ENCODE measurements at regions of chr1 and their contacts with region 1.

Region 1: DNA sequence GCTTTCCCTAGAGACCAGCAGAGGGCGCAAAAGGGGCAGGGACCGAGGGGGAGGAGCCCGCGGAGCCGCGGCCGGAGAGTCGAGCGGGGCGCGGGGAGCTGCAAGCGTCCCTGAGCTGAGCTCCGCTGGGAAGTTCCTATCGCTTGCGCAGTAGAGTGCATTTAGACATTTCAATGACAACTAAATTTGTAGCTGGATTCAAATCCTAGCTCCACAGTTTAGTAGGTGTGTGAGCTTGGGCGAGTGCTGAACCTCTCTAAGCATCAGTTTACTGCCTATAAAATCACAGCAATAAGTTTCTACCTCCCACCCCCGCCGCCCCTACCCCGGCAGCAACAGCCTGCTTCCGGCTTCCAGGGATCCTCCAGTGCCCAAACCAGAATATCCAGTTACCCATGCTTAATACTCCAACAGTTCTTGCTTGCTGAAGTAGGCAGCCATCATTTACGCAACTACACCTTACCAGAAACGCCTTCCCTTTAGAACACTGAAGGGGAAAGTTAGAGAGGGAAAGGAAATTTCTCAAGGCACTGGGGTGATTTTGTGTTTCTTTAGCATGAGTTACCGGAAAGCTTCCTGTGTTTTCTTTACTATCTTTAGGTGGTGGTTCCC is 9.1 kb downstream of the TLR5 start:
- DNase-seq: peak; percentile 92
- H3K4me3 Mint-ChIP-seq: peak overlapping the region; percentile 62
- H3K27ac Mint-ChIP-seq: peak overlapping the region; percentile 72
- H3K4me1 Mint-ChIP-seq: peaks cover 53% of the 10 kb centered on the region
- H3K27me3 Mint-ChIP-seq: no peaks in the 10 kb centered on the region
- CTCF ChIP-seq: peak; percentile 96

Region 2: GRCh38 chr1:222844189-222844779 is 289.6 kb before region 1 on chr1:
- CTCF ChIA-PET with region 1: no interaction called
- intact Hi-C with region 1: no loop called
- DNase-seq: no peak
- H3K4me3 Mint-ChIP-seq: peak overlapping the region; percentile 55
- H3K27ac Mint-ChIP-seq: peak overlapping the region; percentile 95
- H3K4me1 Mint-ChIP-seq: peaks cover 21% of the 10 kb centered on the region
- H3K27me3 Mint-ChIP-seq: no peaks in the 10 kb centered on the region
- CTCF ChIP-seq: no peak

Region 3: DNA sequence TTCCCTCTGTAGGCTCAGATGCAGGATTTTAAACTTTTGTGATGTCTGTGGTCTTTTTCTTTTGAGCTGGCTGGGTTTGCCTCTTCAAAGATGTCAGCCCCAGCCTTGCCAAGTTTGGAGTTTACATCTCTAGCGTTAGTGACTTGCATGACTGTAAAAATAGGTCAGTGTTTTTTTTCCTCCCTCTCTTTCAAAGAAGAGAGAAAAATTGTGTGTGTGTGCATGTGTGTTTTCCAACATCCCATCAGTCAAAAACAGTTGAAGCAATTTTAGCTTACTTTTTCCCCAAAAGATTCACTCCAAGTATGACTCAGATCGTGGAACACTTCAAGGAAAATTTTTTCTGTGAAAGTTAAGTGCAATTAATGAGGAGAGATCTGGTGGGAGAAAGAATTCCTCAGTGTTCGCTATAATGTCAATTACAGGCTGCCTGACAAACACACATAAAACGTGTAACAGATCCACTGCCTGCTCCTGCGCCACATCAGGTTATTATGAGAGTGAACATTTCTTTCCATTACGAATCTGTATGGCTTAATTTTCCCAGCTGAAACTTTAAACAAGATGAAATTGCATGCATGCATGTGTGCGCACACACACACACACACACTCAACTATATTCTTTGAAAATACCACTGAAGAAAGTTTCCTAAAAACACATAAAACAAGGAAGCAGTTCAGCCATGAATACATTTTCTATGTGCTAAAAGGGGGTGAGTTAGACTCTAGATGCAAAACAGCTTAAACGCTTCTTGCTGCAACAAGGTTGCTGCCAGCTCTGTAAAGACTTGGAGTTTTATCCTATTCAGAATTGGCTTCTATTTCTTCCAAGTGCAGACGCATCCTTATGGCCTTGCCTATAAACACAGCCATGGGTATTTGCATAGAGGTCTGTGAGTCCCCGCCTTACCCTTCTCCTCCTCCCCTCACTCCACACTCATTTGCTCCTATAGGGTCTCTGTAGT is 46.4 kb before region 1 on chr1:
- CTCF ChIA-PET with region 1: interaction called, 14 read pairs
- intact Hi-C with region 1: no loop called
- DNase-seq: no peak
- H3K4me3 Mint-ChIP-seq: no peak overlapping the region
- H3K27ac Mint-ChIP-seq: no peak overlapping the region
- H3K4me1 Mint-ChIP-seq: no peaks in the 10 kb centered on the region
- H3K27me3 Mint-ChIP-seq: peaks cover 27% of the 10 kb centered on the region
- CTCF ChIP-seq: no peak

Region 4: DNA sequence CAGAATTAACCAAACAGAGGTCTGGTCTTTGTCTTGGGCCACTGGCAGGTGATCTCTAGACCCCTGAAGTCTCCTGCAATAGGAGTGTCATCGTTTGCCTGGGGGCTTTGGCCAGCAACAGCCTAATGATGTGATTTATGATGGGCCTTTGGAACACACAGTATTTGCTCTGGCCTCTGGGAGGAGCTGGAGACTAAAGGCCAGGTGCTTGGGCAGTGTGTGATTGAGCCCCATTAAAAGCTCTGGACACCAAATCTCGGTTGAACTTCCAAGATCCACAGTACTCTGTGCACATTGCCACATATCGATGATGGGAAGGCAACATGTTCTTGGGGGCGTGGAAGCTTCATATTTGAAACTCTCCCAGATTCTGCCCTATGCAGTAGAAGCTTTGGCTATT is 41.1 kb after region 1 on chr1:
- CTCF ChIA-PET with region 1: interaction called, 18 read pairs
- intact Hi-C with region 1: no loop called
- DNase-seq: peak; percentile 54
- H3K4me3 Mint-ChIP-seq: no peak overlapping the region
- H3K27ac Mint-ChIP-seq: no peak overlapping the region
- H3K4me1 Mint-ChIP-seq: peaks cover 38% of the 10 kb centered on the region
- H3K27me3 Mint-ChIP-seq: no peaks in the 10 kb centered on the region
- CTCF ChIP-seq: peak; percentile 47

Region 5: GRCh38 chr1:223244366-223245103 is 110.6 kb after region 1 on chr1:
- CTCF ChIA-PET with region 1: interaction called, 41 read pairs
- intact Hi-C with region 1: loop called (anchors 1 kb)
- DNase-seq: peak; percentile 43
- H3K4me3 Mint-ChIP-seq: no peak overlapping the region
- H3K27ac Mint-ChIP-seq: peak overlapping the region; percentile 40
- H3K4me1 Mint-ChIP-seq: peaks cover 45% of the 10 kb centered on the region
- H3K27me3 Mint-ChIP-seq: no peaks in the 10 kb centered on the region
- CTCF ChIP-seq: no peak

Region 6: GRCh38 chr1:223363856-223364684 is 230.1 kb after region 1 on chr1 and contains the start of gene SUSD4:
- CTCF ChIA-PET with region 1: interaction called, 10 read pairs
- intact Hi-C with region 1: loop called (anchors 10 kb)
- DNase-seq: peak; percentile 81
- H3K4me3 Mint-ChIP-seq: peak within 1 kb of the TSS; percentile 74
- H3K27ac Mint-ChIP-seq: no peak within 1 kb of the TSS
- H3K4me1 Mint-ChIP-seq: peaks cover 14% of the 10 kb centered on the region
- H3K27me3 Mint-ChIP-seq: peaks cover 77% of the 10 kb centered on the region
- CTCF ChIP-seq: no peak
- total RNA-seq, gene SUSD4: 7.2 and 9.7 TPM in 2 replicates

Region 7: DNA sequence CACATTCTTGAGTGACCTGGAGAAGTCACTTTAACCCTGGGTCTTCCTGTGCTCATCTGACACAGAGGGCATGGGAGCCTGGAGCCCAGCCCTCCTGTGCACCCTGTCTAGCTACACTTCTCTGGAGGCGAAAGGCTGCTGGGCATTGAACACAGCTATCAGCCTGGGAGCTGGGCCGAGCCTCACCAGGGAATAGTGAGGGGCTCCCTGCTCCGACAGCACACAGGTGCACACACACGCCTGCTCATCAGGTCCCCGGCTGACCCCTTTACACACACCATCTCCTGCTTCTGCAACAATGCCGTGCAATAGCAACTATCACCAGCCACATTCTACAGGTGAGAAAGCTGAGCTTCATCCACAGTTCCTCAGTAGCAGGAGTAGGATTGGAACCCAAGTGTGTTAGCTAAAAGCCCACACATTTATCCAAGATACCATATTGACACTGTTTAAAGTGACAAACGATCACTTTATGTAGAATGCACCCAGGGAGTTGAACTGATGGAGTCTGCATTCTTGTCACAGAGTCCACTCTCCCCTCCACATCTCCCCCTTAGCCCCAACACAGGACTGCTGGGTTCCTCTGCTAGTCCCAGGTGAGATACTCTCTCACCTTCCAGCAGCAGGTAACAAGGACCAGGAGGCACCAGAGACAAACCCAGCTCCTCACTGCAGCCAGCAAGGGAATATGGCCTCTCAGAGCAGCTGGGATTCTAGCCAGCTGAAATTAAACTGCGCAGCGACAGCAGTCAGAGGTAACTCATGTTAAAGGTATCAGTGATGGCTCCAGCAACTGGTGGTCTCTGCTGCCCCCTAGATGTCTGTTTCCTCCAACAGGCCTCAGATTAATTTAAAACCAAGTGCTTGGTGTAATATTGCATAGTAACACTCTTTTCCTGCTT is 549.9 kb after region 1 on chr1:
- CTCF ChIA-PET with region 1: interaction called, 16 read pairs
- intact Hi-C with region 1: loop called (anchors 5 kb)
- DNase-seq: peak; percentile 87
- H3K4me3 Mint-ChIP-seq: no peak overlapping the region
- H3K27ac Mint-ChIP-seq: no peak overlapping the region
- H3K4me1 Mint-ChIP-seq: peaks cover 11% of the 10 kb centered on the region
- H3K27me3 Mint-ChIP-seq: no peaks in the 10 kb centered on the region
- CTCF ChIP-seq: peak; percentile 89

Measured in Calu3 (cell line).